Activated CD8-positive, alpha-beta memory T cell treated with anti-CD3 and anti-CD28 coated beads, Interleukin-2, amount 10 ng/mL, durations not matched to agents 7 days and 5 days (primary cell): ENCODE measurements at regions of chr1 and their contacts with region 1.

Region 1: DNA sequence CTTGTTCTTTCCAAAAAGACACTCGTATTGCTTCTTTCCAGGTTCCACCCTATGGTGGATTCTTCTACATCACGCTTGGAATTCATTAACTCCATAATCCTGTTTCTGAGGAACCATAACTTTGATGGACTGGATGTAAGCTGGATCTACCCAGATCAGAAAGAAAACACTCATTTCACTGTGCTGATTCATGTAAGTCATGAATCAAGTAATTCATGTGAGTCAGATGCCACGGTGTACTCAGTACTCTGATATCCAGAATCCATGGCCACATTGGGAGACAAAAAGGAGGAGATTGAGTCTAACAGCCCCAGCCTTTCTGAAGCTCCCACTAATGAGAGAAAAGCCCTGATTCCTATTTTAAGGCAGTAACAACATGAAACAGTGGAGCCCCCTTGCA is 7.4 kb downstream of the CHI3L2 start:
- DNase-seq: no peak
- ATAC-seq: no peak
- H3K4me3 Mint-ChIP-seq: no peak overlapping the region
- H3K27ac Mint-ChIP-seq: no peak overlapping the region
- H3K4me1 Mint-ChIP-seq: peaks cover 8% of the 10 kb centered on the region
- H3K27me3 Mint-ChIP-seq: no peaks in the 10 kb centered on the region

Region 2: DNA sequence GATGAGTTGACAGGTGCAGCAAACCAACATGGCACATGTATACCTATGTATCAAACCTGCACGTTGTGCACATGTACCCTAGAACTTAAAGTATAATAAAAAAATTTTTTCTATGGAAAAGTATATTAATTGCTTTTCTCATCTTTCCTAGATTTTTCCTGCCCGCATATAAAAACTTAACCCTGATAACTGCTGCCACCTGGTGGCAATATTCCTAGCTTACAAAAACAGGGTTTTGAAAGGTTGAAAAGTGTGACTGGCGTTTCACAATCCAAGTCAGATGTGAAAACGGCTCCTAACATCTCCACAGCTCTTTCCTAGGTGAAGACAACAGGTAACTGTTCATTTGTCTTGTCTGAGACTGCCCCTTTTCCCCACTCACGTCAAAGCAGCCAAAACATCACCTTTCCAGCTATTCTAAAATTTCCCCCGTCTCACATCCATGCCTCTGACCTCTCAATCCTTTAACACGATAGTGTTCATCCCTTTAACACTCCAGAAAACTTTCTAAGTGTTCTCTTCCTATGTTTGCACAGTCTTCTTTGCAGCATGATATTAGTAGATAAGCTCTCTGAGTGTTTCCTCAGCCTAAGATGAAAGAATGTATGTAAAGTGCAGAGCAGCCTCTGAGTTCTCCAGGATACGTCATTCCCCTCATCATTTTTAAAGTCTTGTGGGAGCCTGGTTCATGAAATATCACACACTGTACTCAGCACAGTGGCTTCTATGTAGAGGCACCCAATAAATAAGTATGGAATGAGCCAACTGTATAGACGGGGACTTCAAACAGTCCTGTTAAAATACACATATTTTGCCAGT is 165.1 kb after region 1 on chr1:
- CTCF ChIA-PET with region 1: interaction called, 14 read pairs
- DNase-seq: peak; percentile 56
- ATAC-seq: no peak
- H3K4me3 Mint-ChIP-seq: no peak overlapping the region
- H3K27ac Mint-ChIP-seq: no peak overlapping the region
- H3K4me1 Mint-ChIP-seq: peaks cover 8% of the 10 kb centered on the region
- H3K27me3 Mint-ChIP-seq: peaks cover 58% of the 10 kb centered on the region